ENCODE measurements at regions of chr1 and their contacts with region 1.

Region 1: DNA sequence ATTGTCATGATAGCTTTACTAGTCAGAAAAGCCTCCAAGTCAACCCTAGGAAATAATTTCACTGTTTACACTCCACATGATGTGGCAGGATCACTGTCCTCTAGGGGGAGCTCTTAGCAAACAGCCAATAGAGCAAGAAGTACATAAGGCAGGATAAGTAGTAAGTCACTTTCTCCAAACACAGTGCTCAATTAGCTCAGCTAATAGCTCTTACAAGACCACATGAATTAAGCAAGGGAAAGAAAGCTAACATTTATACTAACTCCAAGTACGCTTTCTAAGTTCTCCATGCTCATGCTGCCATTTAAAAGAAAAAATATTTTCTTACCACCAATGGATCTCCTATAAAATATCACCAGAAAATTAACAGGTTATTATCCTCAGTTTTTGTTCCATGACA is 66.9 kb upstream of the LRIF1 start:
- DNase-seq: peak; percentile 77
- ATAC-seq: peak; percentile 56
- H3K4me3 ChIP-seq: no peak overlapping the region
- H3K4me3 Mint-ChIP-seq: no peak overlapping the region
- H3K27ac ChIP-seq: no peak overlapping the region
- H3K27ac Mint-ChIP-seq: no peak overlapping the region
- H3K4me1 ChIP-seq: peaks cover 0 to 5% of the 10 kb centered on the region in 2 donors
- H3K4me1 Mint-ChIP-seq: peaks cover 15% of the 10 kb centered on the region
- H3K27me3 ChIP-seq: no peaks in the 10 kb centered on the region
- H3K27me3 Mint-ChIP-seq: peaks cover 3% of the 10 kb centered on the region
- CTCF ChIP-seq: peak; percentile 89

Region 2: GRCh38 chr1:111015225-111015624 is 15.4 kb before region 1 on chr1:
- CTCF ChIA-PET with region 1: interaction called, 15 read pairs
- POLR2A ChIA-PET with region 1: no interaction called
- intact Hi-C with region 1: no loop called
- DNase-seq: no peak
- ATAC-seq: no peak
- H3K4me3 ChIP-seq: no peak overlapping the region
- H3K4me3 Mint-ChIP-seq: no peak overlapping the region
- H3K27ac ChIP-seq: no peak overlapping the region
- H3K27ac Mint-ChIP-seq: no peak overlapping the region
- H3K4me1 ChIP-seq: no peaks in the 10 kb centered on the region
- H3K4me1 Mint-ChIP-seq: no peaks in the 10 kb centered on the region
- H3K27me3 ChIP-seq: peaks cover 0 to 25% (median 7%) of the 10 kb centered on the region in 4 experiments
- H3K27me3 Mint-ChIP-seq: peaks cover 32% of the 10 kb centered on the region
- CTCF ChIP-seq: no peak

Region 3: GRCh38 chr1:111045033-111045722 is 14.6 kb after region 1 on chr1:
- CTCF ChIA-PET with region 1: interaction called, 23 read pairs
- POLR2A ChIA-PET with region 1: no interaction called
- intact Hi-C with region 1: no loop called
- DNase-seq: no peak
- ATAC-seq: no peak
- H3K4me3 ChIP-seq: no peak overlapping the region
- H3K4me3 Mint-ChIP-seq: no peak overlapping the region
- H3K27ac ChIP-seq: no peak overlapping the region
- H3K27ac Mint-ChIP-seq: no peak overlapping the region
- H3K4me1 ChIP-seq: no peaks in the 10 kb centered on the region
- H3K4me1 Mint-ChIP-seq: no peaks in the 10 kb centered on the region
- H3K27me3 ChIP-seq: no peaks in the 10 kb centered on the region
- H3K27me3 Mint-ChIP-seq: no peaks in the 10 kb centered on the region
- CTCF ChIP-seq: no peak

Region 4: DNA sequence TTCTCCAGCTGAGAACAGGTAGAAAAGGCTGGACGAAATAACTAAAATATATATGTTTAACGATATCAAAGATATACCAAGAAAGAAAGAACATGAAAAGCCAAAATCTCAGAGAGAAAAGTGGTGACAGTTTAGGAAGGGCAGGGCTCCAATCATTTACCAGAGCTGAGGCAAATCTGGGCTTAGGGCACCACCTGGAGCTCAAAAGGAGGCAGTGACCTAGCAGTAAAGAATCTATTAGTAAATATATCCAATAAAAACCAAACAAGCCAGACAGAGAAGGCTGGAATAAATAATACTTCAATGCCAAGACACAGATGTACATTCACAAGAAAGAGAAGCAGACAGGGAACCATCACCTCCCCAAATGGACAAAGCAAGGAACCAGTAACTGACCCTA is 303.6 kb after region 1 on chr1:
- CTCF ChIA-PET with region 1: interaction called, 33 read pairs
- POLR2A ChIA-PET with region 1: no interaction called
- intact Hi-C with region 1: loop called (anchors 1 kb)
- DNase-seq: peak; percentile 72
- ATAC-seq: peak; percentile 62
- H3K4me3 ChIP-seq: no peak overlapping the region
- H3K4me3 Mint-ChIP-seq: no peak overlapping the region
- H3K27ac ChIP-seq: no peak overlapping the region
- H3K27ac Mint-ChIP-seq: no peak overlapping the region
- H3K4me1 ChIP-seq: peaks cover 0 to 6% of the 10 kb centered on the region in 2 donors
- H3K4me1 Mint-ChIP-seq: no peaks in the 10 kb centered on the region
- H3K27me3 ChIP-seq: no peaks in the 10 kb centered on the region
- H3K27me3 Mint-ChIP-seq: no peaks in the 10 kb centered on the region
- CTCF ChIP-seq: peak; percentile 74

Region 5: DNA sequence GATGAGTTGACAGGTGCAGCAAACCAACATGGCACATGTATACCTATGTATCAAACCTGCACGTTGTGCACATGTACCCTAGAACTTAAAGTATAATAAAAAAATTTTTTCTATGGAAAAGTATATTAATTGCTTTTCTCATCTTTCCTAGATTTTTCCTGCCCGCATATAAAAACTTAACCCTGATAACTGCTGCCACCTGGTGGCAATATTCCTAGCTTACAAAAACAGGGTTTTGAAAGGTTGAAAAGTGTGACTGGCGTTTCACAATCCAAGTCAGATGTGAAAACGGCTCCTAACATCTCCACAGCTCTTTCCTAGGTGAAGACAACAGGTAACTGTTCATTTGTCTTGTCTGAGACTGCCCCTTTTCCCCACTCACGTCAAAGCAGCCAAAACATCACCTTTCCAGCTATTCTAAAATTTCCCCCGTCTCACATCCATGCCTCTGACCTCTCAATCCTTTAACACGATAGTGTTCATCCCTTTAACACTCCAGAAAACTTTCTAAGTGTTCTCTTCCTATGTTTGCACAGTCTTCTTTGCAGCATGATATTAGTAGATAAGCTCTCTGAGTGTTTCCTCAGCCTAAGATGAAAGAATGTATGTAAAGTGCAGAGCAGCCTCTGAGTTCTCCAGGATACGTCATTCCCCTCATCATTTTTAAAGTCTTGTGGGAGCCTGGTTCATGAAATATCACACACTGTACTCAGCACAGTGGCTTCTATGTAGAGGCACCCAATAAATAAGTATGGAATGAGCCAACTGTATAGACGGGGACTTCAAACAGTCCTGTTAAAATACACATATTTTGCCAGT is 369.4 kb after region 1 on chr1:
- CTCF ChIA-PET with region 1: interaction called, 58 read pairs
- POLR2A ChIA-PET with region 1: no interaction called
- intact Hi-C with region 1: loop called (anchors 1 kb)
- DNase-seq: peak; percentile 61
- ATAC-seq: no peak
- H3K4me3 ChIP-seq: no peak overlapping the region
- H3K4me3 Mint-ChIP-seq: no peak overlapping the region
- H3K27ac ChIP-seq: no peak overlapping the region
- H3K27ac Mint-ChIP-seq: peak overlapping the region; percentile 8
- H3K4me1 ChIP-seq: peaks cover 12 to 15% of the 10 kb centered on the region in 2 donors
- H3K4me1 Mint-ChIP-seq: peaks cover 24% of the 10 kb centered on the region
- H3K27me3 ChIP-seq: no peaks in the 10 kb centered on the region
- H3K27me3 Mint-ChIP-seq: no peaks in the 10 kb centered on the region
- CTCF ChIP-seq: peak; percentile 70

Region 6: GRCh38 chr1:111406321-111406768 is 375.8 kb after region 1 on chr1:
- CTCF ChIA-PET with region 1: interaction called, 58 read pairs
- POLR2A ChIA-PET with region 1: no interaction called
- intact Hi-C with region 1: no loop called
- DNase-seq: peak; percentile 83
- ATAC-seq: peak; percentile 96
- H3K4me3 ChIP-seq: no peak overlapping the region
- H3K4me3 Mint-ChIP-seq: peak overlapping the region; percentile 59
- H3K27ac ChIP-seq: peak overlapping the region; percentile 32 to 37
- H3K27ac Mint-ChIP-seq: peak overlapping the region; percentile 79
- H3K4me1 ChIP-seq: peaks cover 30 to 35% of the 10 kb centered on the region in 2 donors
- H3K4me1 Mint-ChIP-seq: peaks cover 37% of the 10 kb centered on the region
- H3K27me3 ChIP-seq: no peaks in the 10 kb centered on the region
- H3K27me3 Mint-ChIP-seq: no peaks in the 10 kb centered on the region
- CTCF ChIP-seq: no peak

Region 7: DNA sequence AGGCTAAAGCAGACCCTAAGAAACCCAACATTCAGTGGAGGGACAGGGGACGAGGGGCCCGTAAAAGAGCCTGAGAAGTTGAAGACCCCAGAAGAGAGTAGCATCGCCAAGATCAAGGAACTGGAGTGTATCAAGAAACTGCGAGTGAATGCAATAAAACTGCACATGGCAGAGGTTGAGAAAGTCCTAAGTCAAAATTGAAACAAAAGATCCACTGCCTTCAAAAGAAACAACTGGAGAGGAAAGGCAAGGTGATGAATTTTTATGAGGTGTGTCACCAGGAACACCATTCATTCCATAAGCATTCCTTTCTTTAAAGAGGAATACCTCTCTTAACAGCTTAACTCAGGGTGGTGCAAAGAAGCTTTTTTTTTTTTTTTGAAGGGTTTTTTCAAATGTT is 511.1 kb after region 1 on chr1:
- CTCF ChIA-PET with region 1: no interaction called
- POLR2A ChIA-PET with region 1: no interaction called
- intact Hi-C with region 1: no loop called
- DNase-seq: no peak
- ATAC-seq: no peak
- H3K4me3 ChIP-seq: no peak overlapping the region
- H3K4me3 Mint-ChIP-seq: no peak overlapping the region
- H3K27ac ChIP-seq: no peak overlapping the region
- H3K27ac Mint-ChIP-seq: no peak overlapping the region
- H3K4me1 ChIP-seq: no peaks in the 10 kb centered on the region
- H3K4me1 Mint-ChIP-seq: no peaks in the 10 kb centered on the region
- H3K27me3 ChIP-seq: no peaks in the 10 kb centered on the region
- H3K27me3 Mint-ChIP-seq: peaks cover 12% of the 10 kb centered on the region
- CTCF ChIP-seq: no peak